ENCODE measurements at regions of chr1 and their contacts with region 1.

Region 1: GRCh38 chr1:78318011-78318410 is 172.8 kb upstream of the PTGFR start:
- DNase-seq: no peak
- H3K4me3 ChIP-seq: no peak overlapping the region
- H3K27ac ChIP-seq: no peak overlapping the region
- H3K4me1 ChIP-seq: no peaks in the 10 kb centered on the region
- H3K27me3 ChIP-seq: no peaks in the 10 kb centered on the region
- CTCF ChIP-seq: no peak
- EP300 ChIP-seq: no peak
- POLR2A ChIP-seq: no peak

Region 2: GRCh38 chr1:76820028-76820427 is 1498.0 kb before region 1 on chr1:
- in situ Hi-C with region 1: no loop called
- intact Hi-C with region 1: loop called (anchors 5 kb)
- DNase-seq: no peak
- H3K4me3 ChIP-seq: no peak overlapping the region
- H3K27ac ChIP-seq: no peak overlapping the region
- H3K4me1 ChIP-seq: no peaks in the 10 kb centered on the region
- H3K27me3 ChIP-seq: no peaks in the 10 kb centered on the region
- CTCF ChIP-seq: no peak
- EP300 ChIP-seq: no peak
- POLR2A ChIP-seq: no peak